HEK293 (cell line): ENCODE measurements at regions of chr22 and their contacts with region 1.

Region 1: GRCh38 chr22:42369245-42370041 is 62.8 kb downstream of the NFAM1 start:
- H3K4me3 ChIP-seq: peak overlapping the region; percentile 49
- H3K27ac ChIP-seq: peak overlapping the region; percentile 55
- H3K4me1 ChIP-seq: peaks cover 18% of the 10 kb centered on the region
- CTCF ChIP-seq: no peak

Region 2: GRCh38 chr22:42070517-42071422 is 298.7 kb before region 1 on chr22 and contains the start of gene NAGA:
- CTCF ChIA-PET with region 1: no interaction called
- POLR2A ChIA-PET with region 1: no interaction called
- H3K4me3 ChIP-seq: peak within 1 kb of the TSS; percentile 56
- H3K27ac ChIP-seq: peak within 1 kb of the TSS; percentile 54
- H3K4me1 ChIP-seq: peaks cover 2% of the 10 kb centered on the region; the same call in 1 of the 2 replicates
- CTCF ChIP-seq: no peak

Region 3: GRCh38 chr22:42399315-42400271 is 30.1 kb after region 1 on chr22:
- CTCF ChIA-PET with region 1: interaction called, 5 read pairs
- POLR2A ChIA-PET with region 1: interaction called, 10 read pairs
- H3K4me3 ChIP-seq: no peak overlapping the region
- H3K27ac ChIP-seq: no peak overlapping the region
- H3K4me1 ChIP-seq: 0 out of 2 replicates have a peak, but pooled peaks cover 3% of the 10 kb centered on the region
- CTCF ChIP-seq: peak; percentile 56

Region 4: DNA sequence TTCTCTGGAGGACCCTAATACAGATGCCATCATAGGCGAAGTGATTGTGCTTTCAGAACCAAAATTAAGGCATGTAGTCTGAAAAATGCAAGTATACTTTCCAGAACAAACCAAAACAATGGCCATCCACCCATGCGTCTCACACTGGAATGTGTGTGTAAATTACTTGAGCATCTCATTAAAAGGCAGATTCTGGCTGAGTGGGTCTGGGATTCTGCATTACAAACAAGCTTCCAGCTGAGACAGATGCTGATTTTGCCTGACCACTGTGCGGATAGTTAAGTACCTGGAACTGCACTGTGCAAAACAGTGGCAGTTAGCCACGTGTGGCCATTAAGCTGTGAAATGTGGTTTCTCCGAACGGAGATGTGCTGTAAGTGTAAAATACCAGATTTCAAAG is 124.0 kb after region 1 on chr22:
- CTCF ChIA-PET with region 1: no interaction called
- POLR2A ChIA-PET with region 1: no interaction called
- H3K4me3 ChIP-seq: no peak overlapping the region
- H3K27ac ChIP-seq: no peak overlapping the region
- H3K4me1 ChIP-seq: no peaks in the 10 kb centered on the region
- CTCF ChIP-seq: no peak

Region 5: GRCh38 chr22:42528258-42528948 is 159.0 kb after region 1 on chr22:
- CTCF ChIA-PET with region 1: no interaction called
- POLR2A ChIA-PET with region 1: interaction called, 12 read pairs
- H3K4me3 ChIP-seq: no peak overlapping the region
- H3K27ac ChIP-seq: no peak overlapping the region
- H3K4me1 ChIP-seq: no peaks in the 10 kb centered on the region
- CTCF ChIP-seq: no peak

Region 6: DNA sequence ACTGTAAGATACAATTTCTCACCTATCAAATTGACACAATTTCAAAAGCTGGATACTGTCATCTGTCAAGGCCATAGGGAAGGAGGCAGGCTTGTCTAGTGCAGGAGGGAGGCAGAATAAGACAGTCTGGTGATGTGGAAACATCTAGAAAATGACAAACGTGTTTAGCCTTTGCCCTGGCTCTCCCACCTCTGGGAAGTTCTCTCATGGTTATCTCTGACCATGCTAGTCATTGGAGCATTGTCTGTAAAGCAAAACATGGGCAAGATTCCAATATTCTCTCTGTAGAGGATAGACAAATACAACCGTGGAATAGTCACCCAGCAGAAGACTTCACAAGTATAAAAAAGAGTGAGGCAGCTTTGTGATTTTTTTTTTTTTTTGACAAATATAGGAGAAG is 175.2 kb after region 1 on chr22:
- CTCF ChIA-PET with region 1: no interaction called
- POLR2A ChIA-PET with region 1: no interaction called
- H3K4me3 ChIP-seq: no peak overlapping the region
- H3K27ac ChIP-seq: no peak overlapping the region
- H3K4me1 ChIP-seq: no peaks in the 10 kb centered on the region
- CTCF ChIP-seq: no peak

Region 7: DNA sequence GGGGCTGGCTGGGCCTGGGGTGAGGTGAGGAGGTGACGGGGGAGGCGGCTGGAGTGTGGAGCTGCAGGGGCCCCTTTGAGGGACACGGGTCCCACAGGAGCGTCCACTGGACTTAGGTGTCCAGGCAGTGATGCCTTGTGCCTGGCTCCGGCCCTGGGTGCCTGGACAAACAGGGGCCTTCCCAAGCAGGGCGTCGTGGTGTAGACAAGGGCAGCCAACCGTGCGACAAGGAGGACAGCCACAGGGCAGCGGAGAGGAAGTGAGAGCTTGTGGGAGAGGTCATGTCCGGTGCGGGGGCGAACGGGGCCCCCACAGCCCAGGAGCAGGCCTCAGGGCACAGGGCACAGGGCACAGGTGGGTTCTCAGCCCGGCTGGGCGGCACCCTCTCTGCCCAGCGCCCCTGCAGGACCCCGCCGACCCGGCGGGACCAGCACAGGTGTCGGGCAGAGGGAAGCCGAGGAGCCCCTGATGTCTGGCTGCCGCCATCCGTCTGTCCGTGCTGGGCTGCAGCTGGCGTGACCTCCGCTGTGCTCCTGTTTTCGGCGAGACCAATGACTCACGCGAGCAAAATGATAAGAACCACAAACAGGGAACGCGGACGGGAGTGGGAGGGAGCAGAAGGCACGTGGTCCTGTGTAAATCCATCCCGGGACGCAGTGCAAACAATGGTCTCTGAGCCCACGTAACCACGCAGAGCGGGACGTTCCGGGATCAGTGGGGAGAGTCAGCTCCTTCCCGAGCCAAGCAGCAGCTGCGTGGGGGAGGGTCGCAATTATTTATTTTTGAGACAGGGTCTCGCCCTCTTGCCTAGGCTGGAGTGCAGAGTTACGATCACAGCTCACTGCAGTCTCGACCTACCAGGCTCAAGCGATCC is 400.4 kb after region 1 on chr22:
- CTCF ChIA-PET with region 1: no interaction called
- POLR2A ChIA-PET with region 1: no interaction called
- H3K4me3 ChIP-seq: no peak overlapping the region
- H3K27ac ChIP-seq: no peak overlapping the region; the same call in 1 of the 2 replicates
- H3K4me1 ChIP-seq: peaks cover 3% of the 10 kb centered on the region; the same call in 1 of the 2 replicates
- CTCF ChIP-seq: no peak